ENCODE measurements at regions of chr3 and their contacts with region 1.

Region 1: GRCh38 chr3:98154686-98155085 is 7.4 kb downstream of the OR5H14 start:
- DNase-seq: no peak
- ATAC-seq: no peak
- H3K4me3 ChIP-seq: no peak overlapping the region
- H3K4me1 ChIP-seq: no peaks in the 10 kb centered on the region
- CTCF ChIP-seq: no peak

Region 2: GRCh38 chr3:96877510-96877909 is 1277.2 kb before region 1 on chr3:
- intact Hi-C with region 1: no loop called
- DNase-seq: no peak
- ATAC-seq: no peak
- H3K4me3 ChIP-seq: no peak overlapping the region
- H3K4me1 ChIP-seq: no peaks in the 10 kb centered on the region
- CTCF ChIP-seq: no peak

Region 3: DNA sequence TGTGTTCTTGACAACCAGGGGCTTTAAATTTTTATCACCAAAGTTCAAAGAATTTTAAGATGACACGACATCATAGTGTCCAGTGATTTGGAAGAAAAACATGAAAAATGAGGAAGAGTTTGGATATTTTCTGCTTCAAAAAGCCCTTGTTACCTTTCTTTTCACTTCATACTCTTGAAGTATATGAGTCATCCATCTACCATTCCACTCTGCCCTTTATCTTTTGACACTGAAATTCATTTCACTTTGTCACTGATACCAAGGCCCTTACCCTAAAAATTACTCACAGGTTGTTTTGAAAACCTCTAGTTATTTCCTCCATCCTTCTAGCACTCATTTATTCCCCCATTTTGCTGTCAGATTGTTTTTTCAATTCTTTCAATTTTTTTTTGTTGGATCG is 54.6 kb after region 1 on chr3:
- intact Hi-C with region 1: loop called in 1 of 2 experiments (anchors 2 kb)
- DNase-seq: no peak
- ATAC-seq: no peak
- H3K4me3 ChIP-seq: no peak overlapping the region
- H3K4me1 ChIP-seq: no peaks in the 10 kb centered on the region
- CTCF ChIP-seq: no peak